Activated T-helper 1 cell treated with anti-CD3 and anti-CD28 coated beads, Interleukin-12 subunit alpha, Interleukin-12 subunit beta, Interleukin-2, Interleukin-4 antibody, amounts not matched to agents 30 ng/mL and 10 ng/mL and 1 ng/mL, durations not matched to agents 14 hours and 24 hours and 36 hours (primary cell): ENCODE measurements at regions of chr12 and their contacts with region 1.

Region 1: DNA sequence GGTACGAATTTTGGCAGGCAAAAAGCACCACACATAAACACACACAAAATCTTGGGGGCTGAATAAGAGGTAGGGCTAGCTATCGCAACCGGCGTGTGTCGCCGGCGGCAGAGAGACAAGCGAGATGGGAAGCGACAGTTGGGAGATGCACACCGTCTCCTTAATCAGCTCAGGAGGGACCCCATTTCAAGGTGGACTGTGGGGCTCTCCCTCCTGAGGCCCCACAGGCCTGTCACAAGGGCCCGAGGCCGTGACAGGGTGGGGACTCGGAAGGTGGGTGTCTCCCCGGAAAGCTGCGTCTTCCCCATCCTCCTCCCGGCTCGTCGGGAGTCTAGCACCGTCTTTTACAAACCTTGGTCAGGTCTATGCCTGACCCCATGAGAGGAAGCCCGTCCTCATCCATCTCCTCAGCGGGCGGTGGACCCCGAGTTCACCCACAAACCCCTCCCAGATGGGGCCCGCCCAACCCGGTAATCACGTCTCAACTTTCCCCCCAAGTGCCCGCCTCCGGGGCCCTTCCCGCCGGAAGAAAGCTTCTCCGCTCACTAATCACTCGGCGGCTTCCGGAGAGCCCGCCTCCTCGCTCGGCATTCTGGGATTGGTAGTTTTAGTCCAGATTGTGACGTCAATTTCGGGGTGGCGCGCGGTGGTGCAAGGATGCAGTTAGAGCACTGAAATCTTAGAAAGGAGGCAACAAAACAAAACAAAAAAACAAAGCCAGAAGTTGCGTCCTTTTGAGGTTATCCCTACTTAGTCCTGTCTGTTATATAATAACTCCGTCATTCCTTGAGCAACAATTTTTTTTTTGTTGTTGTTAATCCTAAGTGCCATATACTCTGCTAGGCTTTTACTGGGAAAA is at the start of gene WASHC3:
- DNase-seq: peak; percentile 94
- H3K4me3 Mint-ChIP-seq: peak within 1 kb of the TSS; percentile 93
- H3K27ac Mint-ChIP-seq: peak within 1 kb of the TSS; percentile 97
- H3K4me1 Mint-ChIP-seq: peaks cover 42% of the 10 kb centered on the region
- H3K27me3 Mint-ChIP-seq: no peaks in the 10 kb centered on the region
- total RNA-seq, gene WASHC3: 20.4 and 26.3 TPM in 2 replicates

Region 2: DNA sequence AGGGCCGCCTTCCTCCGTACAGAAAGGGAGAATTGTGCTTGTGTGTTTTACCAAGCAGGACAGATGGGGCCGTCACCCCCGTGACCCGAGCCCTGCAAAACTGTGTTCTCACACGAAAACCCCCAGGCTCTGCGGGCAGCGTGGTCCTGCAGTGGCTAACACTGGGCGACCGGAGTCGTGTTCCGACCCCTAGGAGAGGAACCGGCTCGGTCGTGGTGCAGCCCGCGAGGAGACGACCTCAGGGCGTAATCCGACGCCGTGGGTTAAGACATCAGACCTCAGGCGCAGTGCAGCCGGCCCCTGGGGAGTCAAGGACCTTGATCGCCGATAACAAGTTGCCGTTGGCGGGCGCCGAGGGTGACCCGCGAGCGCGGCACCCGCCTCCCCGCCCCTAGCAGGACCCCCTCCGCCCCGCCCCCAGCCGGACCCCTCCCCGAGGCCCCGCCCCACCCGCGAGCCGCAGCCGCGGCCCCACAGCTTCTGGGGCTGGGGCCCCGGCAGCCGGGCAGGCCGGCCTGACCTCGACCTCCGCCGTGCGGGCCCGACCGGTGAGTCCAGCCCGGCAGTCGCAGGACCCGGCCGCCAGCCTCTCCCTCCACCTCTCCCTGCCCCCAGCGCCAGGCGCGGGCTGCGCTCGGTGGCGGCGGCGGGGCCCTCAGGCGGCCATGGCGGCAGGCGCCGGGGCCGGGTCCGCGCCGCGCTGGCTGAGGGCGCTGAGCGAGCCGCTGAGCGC is 364.4 kb before region 1 on chr12 and contains the start of gene CHPT1:
- intact Hi-C with region 1: loop called (anchors 5 kb)
- DNase-seq: peak; percentile 34
- H3K4me3 Mint-ChIP-seq: peak within 1 kb of the TSS; percentile 88
- H3K27ac Mint-ChIP-seq: peak within 1 kb of the TSS; percentile 67
- H3K4me1 Mint-ChIP-seq: peaks cover 23% of the 10 kb centered on the region
- H3K27me3 Mint-ChIP-seq: peaks cover 33% of the 10 kb centered on the region
- total RNA-seq, gene CHPT1: 13.1 and 13.3 TPM in 2 replicates

Region 3: DNA sequence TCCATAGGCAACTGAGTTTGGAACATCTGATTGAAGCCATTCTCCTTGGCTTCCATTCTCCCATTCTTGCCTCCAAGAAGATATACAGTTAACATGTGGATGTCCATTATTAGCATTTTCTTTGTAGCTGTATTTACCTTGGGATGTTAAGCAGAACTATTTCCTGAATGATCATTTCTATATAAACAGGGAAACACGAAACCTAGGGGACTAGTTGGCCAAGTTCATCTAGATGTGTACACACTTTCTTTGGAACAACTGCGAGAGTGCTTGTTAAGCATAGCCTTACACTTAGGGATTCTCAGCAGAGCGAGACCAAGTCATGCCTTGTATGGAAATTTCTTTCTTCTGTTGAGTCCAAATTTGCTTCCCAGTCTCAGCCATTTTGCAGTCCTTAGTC is 142.3 kb before region 1 on chr12:
- intact Hi-C with region 1: loop called (anchors 2 kb)
- DNase-seq: no peak
- H3K4me3 Mint-ChIP-seq: no peak overlapping the region
- H3K27ac Mint-ChIP-seq: no peak overlapping the region
- H3K4me1 Mint-ChIP-seq: peaks cover 10% of the 10 kb centered on the region
- H3K27me3 Mint-ChIP-seq: peaks cover 2% of the 10 kb centered on the region

Region 4: GRCh38 chr12:102119674-102120563 is 58.1 kb after region 1 on chr12 and contains the starts of genes NUP37 and PARPBP:
- intact Hi-C with region 1: loop called (anchors 1 kb)
- DNase-seq: peak; percentile 92
- H3K4me3 Mint-ChIP-seq: peak within 1 kb of the TSS; percentile 92
- H3K27ac Mint-ChIP-seq: peak within 1 kb of the TSS; percentile 95
- H3K4me1 Mint-ChIP-seq: peaks cover 48% of the 10 kb centered on the region
- H3K27me3 Mint-ChIP-seq: no peaks in the 10 kb centered on the region
- total RNA-seq, gene NUP37: 81.5 and 84.1 TPM in 2 replicates
- total RNA-seq, gene PARPBP: 23.5 and 25.1 TPM in 2 replicates

Region 5: DNA sequence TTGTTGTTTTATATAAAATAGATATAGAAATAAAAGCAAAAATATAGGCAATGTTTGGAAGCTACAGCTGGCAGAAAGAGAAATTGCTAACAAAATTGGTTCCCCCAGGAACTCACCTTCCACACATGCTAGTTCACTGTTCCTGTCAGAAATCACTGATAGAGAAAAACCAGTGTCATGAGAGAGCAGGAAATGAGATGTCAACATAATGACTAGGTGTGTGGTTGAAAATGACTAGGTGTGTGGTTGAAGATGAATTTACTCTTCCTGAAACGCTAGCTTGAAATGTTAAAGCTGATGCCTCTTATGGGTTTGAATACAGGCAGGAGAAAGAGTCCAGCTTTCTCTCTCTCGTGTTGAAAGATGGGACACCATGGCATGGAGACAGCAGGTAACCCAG is 1217.7 kb after region 1 on chr12:
- intact Hi-C with region 1: loop called (anchors 5 kb)
- DNase-seq: peak; percentile 17
- H3K4me3 Mint-ChIP-seq: no peak overlapping the region
- H3K27ac Mint-ChIP-seq: peak overlapping the region; percentile 15
- H3K4me1 Mint-ChIP-seq: peaks cover 23% of the 10 kb centered on the region
- H3K27me3 Mint-ChIP-seq: peaks cover 14% of the 10 kb centered on the region